H1 (cell line): ENCODE measurements at regions of chr1 and their contacts with region 1.

Region 1: DNA sequence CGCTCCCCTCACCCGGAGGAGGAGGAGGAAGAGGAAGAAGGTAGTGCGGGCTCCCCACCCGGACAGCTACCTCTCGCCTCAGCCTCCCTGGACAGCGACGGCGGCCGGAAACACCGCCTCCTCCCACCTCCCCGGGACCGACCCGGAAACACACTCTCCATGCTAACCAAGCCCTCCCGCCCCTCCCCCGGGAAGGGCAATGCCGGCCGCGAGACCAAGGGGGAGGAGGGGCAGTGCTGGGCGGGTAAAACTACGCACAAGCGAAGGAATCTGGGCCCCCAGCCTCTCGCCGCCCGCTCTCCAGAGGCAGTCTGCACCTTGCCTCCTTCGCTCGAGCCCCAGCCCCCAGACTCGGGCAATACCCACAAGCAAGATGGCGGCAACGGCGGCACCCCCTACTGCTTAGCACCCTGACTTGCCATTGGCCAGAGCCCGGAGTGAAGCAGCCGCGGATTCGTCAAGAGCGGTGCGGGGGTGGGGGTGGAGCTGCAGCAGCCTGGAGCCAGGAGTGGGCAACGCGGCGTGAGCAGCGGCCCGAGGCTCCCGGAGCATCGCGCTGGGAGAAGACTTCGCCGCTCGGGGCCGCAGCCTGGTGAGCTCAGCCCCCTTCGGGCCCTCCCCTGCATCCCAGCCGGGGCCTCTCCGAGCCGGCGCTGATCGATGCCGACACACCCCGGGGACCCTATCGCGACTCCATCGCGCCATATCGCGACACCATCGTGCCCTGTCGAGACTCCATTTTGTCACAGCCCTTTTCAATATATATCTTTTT is at the starts of genes KIAA0319L and NCDN:
- DNase-seq: peak; percentile 95 to 98
- H3K4me3 ChIP-seq: peak within 1 kb of the TSS; percentile 72 to 91 (median 80)
- H3K27ac ChIP-seq: peak within 1 kb of the TSS; percentile 96
- H3K4me1 ChIP-seq: peaks cover 7 to 20% (median 16%) of the 10 kb centered on the region in 4 experiments; a peak in 6 of 7 replicates
- H3K27me3 ChIP-seq: no peaks in the 10 kb centered on the region
- CTCF ChIP-seq: no peak
- EP300 ChIP-seq: 0 out of 3 replicates have a peak, but pooled peaks of 1 of the 2 experiments have one; percentile 21
- POLR2A ChIP-seq: peak in 1 of 2 experiments; percentile 44; a peak in 1 of 3 replicates
- RAD21 ChIP-seq: no peak
- total RNA-seq, gene KIAA0319L: 49.4 and 55.7 TPM in 2 replicates
- total RNA-seq, gene NCDN: 35.4 and 36.5 TPM in 2 replicates

Region 2: DNA sequence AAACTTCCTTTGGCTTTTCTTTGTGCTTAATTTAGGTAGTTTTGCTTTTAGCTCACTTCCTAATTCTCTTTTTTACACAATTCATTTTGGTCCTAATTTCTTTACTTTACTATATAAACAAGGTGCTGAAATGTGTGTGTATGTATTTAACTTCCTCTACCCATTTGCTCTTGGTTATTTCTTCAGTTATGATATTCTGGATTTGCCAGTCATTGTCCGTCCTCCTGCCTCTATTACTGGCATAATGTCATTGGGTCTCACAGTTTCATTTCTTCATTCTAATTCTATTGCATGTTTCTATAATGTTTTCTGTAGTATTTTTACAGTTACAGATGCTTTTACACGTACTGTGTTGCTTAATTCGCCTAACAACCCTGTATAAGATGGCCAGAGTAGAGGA is 192.7 kb before region 1 on chr1:
- CTCF ChIA-PET with region 1: no interaction called
- POLR2A ChIA-PET with region 1: no interaction called
- DNase-seq: no peak
- H3K4me3 ChIP-seq: no peak overlapping the region
- H3K27ac ChIP-seq: no peak overlapping the region
- H3K4me1 ChIP-seq: no peaks in the 10 kb centered on the region; a peak in 1 of 7 replicates
- H3K27me3 ChIP-seq: no peaks in the 10 kb centered on the region
- CTCF ChIP-seq: no peak
- EP300 ChIP-seq: no peak
- POLR2A ChIP-seq: no peak
- RAD21 ChIP-seq: no peak

Region 3: DNA sequence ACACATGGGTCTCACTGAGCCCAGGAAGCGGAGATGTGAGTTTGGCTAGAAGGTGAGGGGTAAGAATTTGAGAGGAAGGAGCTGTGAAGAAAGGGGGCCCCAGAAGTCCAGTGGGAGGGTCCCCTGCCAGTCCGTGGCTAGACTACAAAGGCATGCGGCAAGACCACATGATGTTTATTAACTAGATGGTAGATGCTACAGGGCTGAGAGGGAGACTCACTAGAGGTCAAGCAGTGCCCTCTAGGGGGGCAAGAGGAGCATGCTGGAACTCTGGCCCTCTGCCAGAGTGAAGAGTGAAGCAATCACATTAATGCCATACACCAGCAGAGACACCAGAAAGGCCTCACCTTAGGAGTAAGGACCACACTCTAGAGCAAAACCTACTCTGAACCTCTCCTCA is 12.5 kb before region 1 on chr1:
- CTCF ChIA-PET with region 1: interaction called, 4 read pairs
- POLR2A ChIA-PET with region 1: interaction called, 22 read pairs
- DNase-seq: peak in 1 of 2 experiments; percentile 46
- H3K4me3 ChIP-seq: no peak overlapping the region
- H3K27ac ChIP-seq: no peak overlapping the region
- H3K4me1 ChIP-seq: peaks cover 0 to 3% (median 0%) of the 10 kb centered on the region in 4 experiments; a peak in 1 of 7 replicates
- H3K27me3 ChIP-seq: no peaks in the 10 kb centered on the region
- CTCF ChIP-seq: peak; percentile 67 to 94 (median 80)
- EP300 ChIP-seq: no peak
- POLR2A ChIP-seq: no peak
- RAD21 ChIP-seq: peak; percentile 92

Region 4: DNA sequence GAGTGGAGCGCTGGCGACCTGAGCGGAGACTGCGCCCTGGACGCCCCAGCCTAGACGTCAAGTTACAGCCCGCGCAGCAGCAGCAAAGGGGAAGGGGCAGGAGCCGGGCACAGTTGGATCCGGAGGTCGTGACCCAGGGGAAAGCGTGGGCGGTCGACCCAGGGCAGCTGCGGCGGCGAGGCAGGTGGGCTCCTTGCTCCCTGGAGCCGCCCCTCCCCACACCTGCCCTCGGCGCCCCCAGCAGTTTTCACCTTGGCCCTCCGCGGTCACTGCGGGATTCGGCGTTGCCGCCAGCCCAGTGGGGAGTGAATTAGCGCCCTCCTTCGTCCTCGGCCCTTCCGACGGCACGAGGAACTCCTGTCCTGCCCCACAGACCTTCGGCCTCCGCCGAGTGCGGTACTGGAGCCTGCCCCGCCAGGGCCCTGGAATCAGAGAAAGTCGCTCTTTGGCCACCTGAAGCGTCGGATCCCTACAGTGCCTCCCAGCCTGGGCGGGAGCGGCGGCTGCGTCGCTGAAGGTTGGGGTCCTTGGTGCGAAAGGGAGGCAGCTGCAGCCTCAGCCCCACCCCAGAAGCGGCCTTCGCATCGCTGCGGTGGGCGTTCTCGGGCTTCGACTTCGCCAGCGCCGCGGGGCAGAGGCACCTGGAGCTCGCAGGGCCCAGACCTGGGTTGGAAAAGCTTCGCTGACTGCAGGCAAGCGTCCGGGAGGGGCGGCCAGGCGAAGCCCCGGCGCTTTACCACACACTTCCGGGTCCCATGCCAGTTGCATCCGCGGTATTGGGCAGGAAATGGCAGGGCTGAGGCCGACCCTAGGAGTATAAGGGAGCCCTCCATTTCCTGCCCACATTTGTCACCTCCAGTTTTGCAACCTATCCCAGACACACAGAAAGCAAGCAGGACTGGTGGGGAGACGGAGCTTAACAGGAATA is 19.9 kb after region 1 on chr1:
- CTCF ChIA-PET with region 1: interaction called, 7 read pairs
- POLR2A ChIA-PET with region 1: interaction called, 13 read pairs
- DNase-seq: peak in 1 of 2 experiments; percentile 79
- H3K4me3 ChIP-seq: peak overlapping the region; percentile 30 to 58 (median 46)
- H3K27ac ChIP-seq: no peak overlapping the region
- H3K4me1 ChIP-seq: peaks cover 7 to 20% (median 15%) of the 10 kb centered on the region in 4 experiments
- H3K27me3 ChIP-seq: peaks cover 60 to 69% (median 67%) of the 10 kb centered on the region in 4 experiments
- CTCF ChIP-seq: no peak
- EP300 ChIP-seq: no peak
- POLR2A ChIP-seq: no peak
- RAD21 ChIP-seq: no peak

Region 5: GRCh38 chr1:35637401-35637809 is 79.9 kb after region 1 on chr1:
- CTCF ChIA-PET with region 1: no interaction called
- POLR2A ChIA-PET with region 1: no interaction called
- DNase-seq: no peak
- H3K4me3 ChIP-seq: peak overlapping the region in 1 of 4 experiments; percentile 29; a peak in 2 of 8 replicates
- H3K27ac ChIP-seq: peak overlapping the region; percentile 33; the same call in 1 of the 2 replicates
- H3K4me1 ChIP-seq: no peaks in the 10 kb centered on the region
- H3K27me3 ChIP-seq: no peaks in the 10 kb centered on the region
- CTCF ChIP-seq: no peak
- EP300 ChIP-seq: no peak
- POLR2A ChIP-seq: no peak
- RAD21 ChIP-seq: no peak